ENCODE measurements at regions of chr2 and their contacts with region 1.

Region 1: GRCh38 chr2:175181104-175181876 is at the start of gene ATP5MC3:
- DNase-seq: peak; percentile 89
- H3K4me3 Mint-ChIP-seq: peak within 1 kb of the TSS; percentile 89
- H3K27ac Mint-ChIP-seq: peak within 1 kb of the TSS; percentile 84
- H3K4me1 Mint-ChIP-seq: peaks cover 22% of the 10 kb centered on the region
- H3K27me3 Mint-ChIP-seq: no peaks in the 10 kb centered on the region
- total RNA-seq, gene ATP5MC3: 365 and 380 TPM in 2 replicates

Region 2: DNA sequence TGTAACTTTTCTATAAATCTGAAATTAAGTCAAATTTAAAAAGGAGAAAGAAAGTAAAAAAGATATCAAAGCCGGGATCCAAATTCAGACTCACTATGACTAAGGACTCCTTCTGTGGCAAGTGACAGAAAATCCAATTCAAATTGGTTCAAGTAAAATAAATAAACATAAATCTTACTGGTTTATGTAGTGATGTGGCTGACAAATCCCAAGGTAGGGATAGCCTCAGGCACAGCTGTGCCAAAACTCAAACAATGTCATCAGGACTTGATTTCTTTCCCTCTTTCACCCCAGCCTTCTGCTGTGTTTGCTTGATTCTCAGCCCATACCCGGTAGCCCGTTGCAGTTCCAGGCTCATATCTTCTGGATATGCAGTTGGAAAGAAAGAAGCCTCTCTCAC is 1500.7 kb before region 1 on chr2:
- intact Hi-C with region 1: no loop called
- DNase-seq: no peak
- H3K4me3 Mint-ChIP-seq: no peak overlapping the region
- H3K27ac Mint-ChIP-seq: no peak overlapping the region
- H3K4me1 Mint-ChIP-seq: no peaks in the 10 kb centered on the region
- H3K27me3 Mint-ChIP-seq: no peaks in the 10 kb centered on the region

Region 3: DNA sequence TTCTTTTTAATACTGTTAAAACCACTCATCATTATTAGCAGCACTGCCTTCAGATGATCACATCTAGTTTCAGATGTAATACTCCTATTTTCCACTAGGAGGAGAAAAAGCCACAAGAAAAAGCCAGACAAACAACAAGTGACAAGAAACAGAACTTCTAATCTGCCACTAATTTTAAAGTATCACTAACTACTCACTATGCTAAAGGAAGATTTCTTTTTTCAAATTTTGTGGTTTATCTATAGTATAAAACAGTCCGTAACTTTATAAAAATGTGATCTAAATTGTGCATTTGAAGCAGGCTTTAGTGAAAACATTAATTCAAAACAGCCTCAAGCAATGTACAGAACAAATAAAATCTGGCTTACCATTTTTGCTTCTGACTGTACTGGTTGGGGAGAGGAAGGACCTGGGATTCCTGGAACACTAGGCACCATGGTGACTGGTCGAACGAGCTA is 70.1 kb before region 1 on chr2:
- intact Hi-C with region 1: loop called (anchors 1 kb)
- DNase-seq: no peak
- H3K4me3 Mint-ChIP-seq: no peak overlapping the region
- H3K27ac Mint-ChIP-seq: peak overlapping the region; percentile 31
- H3K4me1 Mint-ChIP-seq: peaks cover 4% of the 10 kb centered on the region
- H3K27me3 Mint-ChIP-seq: no peaks in the 10 kb centered on the region

Region 4: DNA sequence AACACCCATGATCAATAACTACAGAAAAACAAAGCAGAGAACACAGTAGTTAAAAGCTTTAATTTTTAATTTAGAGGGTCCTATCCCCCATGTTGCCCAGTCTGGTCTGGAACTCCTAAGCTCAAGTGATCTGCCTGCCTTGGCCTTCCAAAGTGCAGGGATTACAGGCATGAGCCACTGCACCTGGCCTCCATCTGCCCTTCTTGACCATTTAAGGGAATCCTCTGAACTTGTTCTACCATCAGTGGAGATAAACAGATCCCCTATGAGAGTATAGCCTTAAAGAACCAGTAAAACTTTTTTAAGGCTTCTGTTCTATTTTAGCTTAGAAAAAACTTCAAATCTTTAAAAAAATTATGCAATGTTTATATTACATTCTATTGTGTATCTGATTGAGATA is 13.7 kb after region 1 on chr2:
- intact Hi-C with region 1: no loop called
- DNase-seq: no peak
- H3K4me3 Mint-ChIP-seq: no peak overlapping the region
- H3K27ac Mint-ChIP-seq: no peak overlapping the region
- H3K4me1 Mint-ChIP-seq: no peaks in the 10 kb centered on the region
- H3K27me3 Mint-ChIP-seq: peaks cover 30% of the 10 kb centered on the region

Region 5: GRCh38 chr2:175227393-175227792 is 46.1 kb after region 1 on chr2:
- intact Hi-C with region 1: loop called (anchors 1 kb)
- DNase-seq: no peak
- H3K4me3 Mint-ChIP-seq: peak overlapping the region; percentile 3
- H3K27ac Mint-ChIP-seq: peak overlapping the region; percentile 80
- H3K4me1 Mint-ChIP-seq: peaks cover 26% of the 10 kb centered on the region
- H3K27me3 Mint-ChIP-seq: peaks cover 19% of the 10 kb centered on the region